ENCODE measurements at regions of chr21 and their contacts with region 1.

Region 1: DNA sequence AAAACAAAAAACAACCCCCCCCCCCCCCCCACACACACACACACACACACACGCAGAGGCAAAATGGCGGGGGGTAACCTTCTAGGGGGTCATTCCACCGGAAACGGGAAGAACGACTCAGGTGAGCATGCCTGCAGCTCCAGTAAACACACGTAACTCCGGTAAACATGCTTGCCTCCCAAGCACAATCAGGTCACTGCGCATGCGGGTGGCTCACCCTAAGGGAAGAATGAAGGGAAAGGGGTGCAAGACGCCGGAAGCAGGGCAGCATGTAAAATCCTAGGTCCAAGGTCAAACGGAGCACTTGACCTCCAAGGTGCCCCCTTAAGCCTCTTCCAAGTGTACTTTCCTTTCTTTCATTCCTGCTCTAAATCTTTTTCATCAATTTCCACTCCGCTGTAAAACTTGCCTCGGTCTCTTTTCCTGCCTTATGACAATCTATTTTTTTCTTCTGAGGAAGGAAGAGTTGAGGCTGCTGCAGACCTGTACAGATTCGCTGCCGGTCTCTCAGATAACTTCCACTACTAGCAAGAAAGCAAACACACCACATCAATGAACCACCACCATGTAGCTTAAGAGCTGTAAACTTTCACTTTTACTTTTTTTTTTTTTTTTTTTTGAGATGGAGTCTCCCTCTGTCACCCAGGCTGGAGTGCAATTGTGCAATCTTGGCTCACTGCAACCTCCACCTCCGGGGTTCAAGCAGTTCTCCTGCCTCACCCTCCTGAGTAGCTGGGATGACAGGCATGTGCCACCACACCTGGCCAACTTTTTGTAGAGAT is 21.0 kb upstream of the CBR3 start:
- DNase-seq: no peak
- ATAC-seq: no peak
- H3K4me3 ChIP-seq: no peak overlapping the region
- H3K27ac ChIP-seq: no peak overlapping the region
- H3K4me1 ChIP-seq: peaks cover 0 to 10% of the 10 kb centered on the region in 2 experiments; a peak in 3 of 4 replicates
- H3K27me3 ChIP-seq: no peaks in the 10 kb centered on the region
- CTCF ChIP-seq: no peak
- POLR2A ChIP-seq: no peak
- RAD21 ChIP-seq: no peak

Region 2: GRCh38 chr21:35850029-35850428 is 263.8 kb before region 1 on chr21:
- CTCF ChIA-PET with region 1: no interaction called
- POLR2A ChIA-PET with region 1: no interaction called
- RAD21 ChIA-PET with region 1: no interaction called
- intact Hi-C with region 1: no loop called
- DNase-seq: no peak
- ATAC-seq: no peak
- H3K4me3 ChIP-seq: no peak overlapping the region
- H3K27ac ChIP-seq: no peak overlapping the region
- H3K4me1 ChIP-seq: no peaks in the 10 kb centered on the region
- H3K27me3 ChIP-seq: no peaks in the 10 kb centered on the region
- CTCF ChIP-seq: no peak
- POLR2A ChIP-seq: no peak
- RAD21 ChIP-seq: no peak

Region 3: DNA sequence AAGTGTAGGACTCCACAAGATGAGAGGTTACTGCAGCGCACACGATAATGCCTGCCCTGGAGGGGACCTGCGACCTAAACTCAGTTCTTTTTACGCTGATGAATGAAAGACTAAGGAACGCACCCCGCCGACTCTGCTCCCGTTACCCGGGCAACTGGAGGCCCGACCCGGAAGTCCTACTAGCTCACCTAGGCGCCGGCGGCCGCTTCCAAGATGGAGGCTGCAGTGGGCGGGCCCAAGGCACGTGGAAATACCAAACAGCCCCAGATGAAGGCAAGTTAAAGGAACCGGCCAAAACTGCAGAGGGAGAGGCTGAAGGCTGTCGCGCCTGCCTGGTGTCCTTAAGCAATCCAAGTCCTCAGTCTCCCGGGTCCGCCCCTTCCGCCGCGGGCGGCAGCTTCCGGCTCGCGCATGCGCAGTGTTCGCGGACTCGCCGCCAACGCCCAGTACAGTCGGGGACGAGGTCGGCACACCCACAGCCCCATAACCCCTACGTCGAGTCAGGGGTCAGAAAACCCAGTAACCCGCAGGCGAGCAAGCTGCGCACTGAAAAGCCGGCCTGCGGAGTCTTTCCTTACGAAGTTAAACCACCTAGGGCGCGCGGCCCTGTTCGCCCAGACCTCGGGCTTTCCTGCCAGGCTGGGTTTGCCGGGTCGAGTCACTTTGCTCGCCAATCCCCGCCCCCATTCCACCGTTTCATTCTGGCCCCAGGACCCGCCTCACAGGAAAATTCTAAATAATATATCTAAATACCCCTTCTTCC is 53.5 kb before region 1 on chr21 and contains the start of gene SETD4:
- CTCF ChIA-PET with region 1: interaction called, 4 read pairs
- POLR2A ChIA-PET with region 1: no interaction called
- RAD21 ChIA-PET with region 1: no interaction called
- intact Hi-C with region 1: loop called (anchors 5 kb)
- DNase-seq: peak; percentile 90
- ATAC-seq: peak; percentile 90
- H3K4me3 ChIP-seq: peak within 1 kb of the TSS; percentile 91 to 99
- H3K27ac ChIP-seq: peak within 1 kb of the TSS; percentile 98
- H3K4me1 ChIP-seq: peaks cover 11 to 13% of the 10 kb centered on the region in 2 experiments; a peak in 3 of 4 replicates
- H3K27me3 ChIP-seq: no peaks in the 10 kb centered on the region
- CTCF ChIP-seq: no peak
- POLR2A ChIP-seq: peak; percentile 85
- RAD21 ChIP-seq: no peak
- total RNA-seq, gene SETD4: 22.7 TPM

Region 4: DNA sequence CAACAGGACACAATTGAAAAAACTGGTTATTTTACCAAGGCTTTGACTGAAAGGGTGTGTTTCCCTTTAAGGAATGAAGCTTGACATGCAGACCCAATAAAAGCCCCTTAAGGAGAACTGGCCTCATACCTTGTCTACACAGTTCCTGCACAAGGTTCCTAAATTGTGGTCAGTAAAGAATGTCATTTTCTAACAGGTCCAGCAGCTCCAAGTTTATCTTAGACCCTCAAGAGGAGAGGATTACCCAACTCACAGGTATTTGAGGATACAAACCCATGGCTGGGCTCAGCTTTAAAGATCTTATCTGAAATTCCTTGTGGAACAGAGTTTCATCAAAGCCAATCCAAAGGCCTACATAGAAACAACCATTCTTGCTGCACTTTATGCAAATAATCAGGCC is 10.4 kb before region 1 on chr21:
- CTCF ChIA-PET with region 1: interaction called, 14 read pairs
- POLR2A ChIA-PET with region 1: no interaction called
- RAD21 ChIA-PET with region 1: no interaction called
- intact Hi-C with region 1: no loop called
- DNase-seq: no peak
- ATAC-seq: no peak
- H3K4me3 ChIP-seq: no peak overlapping the region
- H3K27ac ChIP-seq: no peak overlapping the region
- H3K4me1 ChIP-seq: peaks cover 0 to 8% of the 10 kb centered on the region in 2 experiments; a peak in 2 of 4 replicates
- H3K27me3 ChIP-seq: no peaks in the 10 kb centered on the region
- CTCF ChIP-seq: no peak
- POLR2A ChIP-seq: no peak
- RAD21 ChIP-seq: no peak

Region 5: GRCh38 chr21:36163750-36164741 is 50.2 kb after region 1 on chr21:
- CTCF ChIA-PET with region 1: no interaction called
- POLR2A ChIA-PET with region 1: no interaction called
- RAD21 ChIA-PET with region 1: no interaction called
- intact Hi-C with region 1: no loop called
- DNase-seq: no peak
- ATAC-seq: no peak
- H3K4me3 ChIP-seq: no peak overlapping the region
- H3K27ac ChIP-seq: no peak overlapping the region
- H3K4me1 ChIP-seq: peaks cover 6 to 11% of the 10 kb centered on the region in 2 experiments
- H3K27me3 ChIP-seq: no peaks in the 10 kb centered on the region
- CTCF ChIP-seq: no peak
- POLR2A ChIP-seq: no peak
- RAD21 ChIP-seq: no peak